ENCODE measurements at regions of chr19 and their contacts with region 1.

Region 1: DNA sequence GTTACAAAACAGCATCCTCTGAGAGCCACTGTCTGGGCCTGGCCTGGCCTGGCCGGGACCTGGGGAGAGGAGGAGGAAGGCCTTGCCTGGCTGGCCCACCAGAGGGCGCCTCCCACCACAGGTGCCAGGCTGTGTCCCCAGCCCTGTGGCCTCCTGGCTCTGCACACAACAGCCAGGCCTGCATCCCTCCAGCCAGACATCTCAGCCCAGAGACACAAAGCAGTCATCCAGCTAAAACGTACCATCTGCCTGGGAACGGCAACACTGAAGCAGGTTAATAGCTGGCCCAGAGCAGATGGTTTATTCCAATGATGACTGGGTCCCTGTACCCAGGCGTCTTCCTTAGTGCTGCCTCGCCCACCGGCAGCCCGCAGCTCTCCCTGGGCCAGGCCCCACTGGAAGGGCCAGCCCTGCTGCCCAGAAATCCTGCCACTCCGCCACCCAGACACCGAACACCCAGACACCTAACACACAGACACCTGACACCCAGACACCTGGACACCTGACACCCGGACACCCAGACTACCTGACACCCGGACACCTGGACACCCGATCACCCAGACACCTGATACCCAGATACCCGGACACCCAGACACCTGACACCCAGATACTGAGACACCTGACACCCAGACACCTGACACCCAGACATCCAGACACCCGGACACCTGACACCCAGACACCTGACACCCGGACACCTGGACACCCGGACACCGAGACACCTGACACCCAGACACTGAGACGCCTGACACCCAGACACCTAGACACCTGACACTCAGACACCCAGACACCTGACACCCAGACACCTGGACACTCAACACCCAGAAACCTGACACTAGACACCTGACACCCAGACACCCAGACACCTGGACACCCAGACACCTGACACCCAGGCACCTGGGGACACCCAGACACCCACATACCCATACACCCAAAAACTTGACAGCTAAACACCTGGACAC is 20.1 kb downstream of the C19orf12 start:
- DNase-seq: no peak
- H3K4me3 ChIP-seq: no peak overlapping the region
- H3K27me3 ChIP-seq: no peaks in the 10 kb centered on the region
- CTCF ChIP-seq: peak; percentile 97

Region 2: DNA sequence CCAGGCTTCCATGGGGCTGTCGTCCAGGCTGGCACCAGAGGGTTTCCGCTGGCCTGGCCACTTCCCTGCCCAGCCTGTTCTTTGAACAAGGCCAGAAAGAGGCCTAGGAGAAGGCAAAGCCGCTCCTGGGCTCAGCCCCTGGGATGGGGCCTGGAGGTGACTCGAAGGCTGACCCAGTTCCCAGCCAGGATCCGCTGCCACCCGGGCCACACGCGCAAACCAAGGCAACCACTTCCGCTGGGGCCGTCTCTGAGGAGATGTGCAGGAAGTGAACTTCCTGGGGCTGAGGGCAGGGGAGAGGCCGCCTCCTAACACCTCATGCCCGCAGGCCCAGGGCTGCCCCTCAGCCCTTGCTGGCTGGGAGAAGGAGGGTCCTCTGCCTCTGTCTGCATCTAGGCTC is 14.5 kb before region 1 on chr19:
- CTCF ChIA-PET with region 1: interaction called, 13 read pairs
- POLR2A ChIA-PET with region 1: no interaction called
- DNase-seq: no peak
- H3K4me3 ChIP-seq: no peak overlapping the region
- H3K27me3 ChIP-seq: no peaks in the 10 kb centered on the region
- CTCF ChIP-seq: no peak

Region 3: DNA sequence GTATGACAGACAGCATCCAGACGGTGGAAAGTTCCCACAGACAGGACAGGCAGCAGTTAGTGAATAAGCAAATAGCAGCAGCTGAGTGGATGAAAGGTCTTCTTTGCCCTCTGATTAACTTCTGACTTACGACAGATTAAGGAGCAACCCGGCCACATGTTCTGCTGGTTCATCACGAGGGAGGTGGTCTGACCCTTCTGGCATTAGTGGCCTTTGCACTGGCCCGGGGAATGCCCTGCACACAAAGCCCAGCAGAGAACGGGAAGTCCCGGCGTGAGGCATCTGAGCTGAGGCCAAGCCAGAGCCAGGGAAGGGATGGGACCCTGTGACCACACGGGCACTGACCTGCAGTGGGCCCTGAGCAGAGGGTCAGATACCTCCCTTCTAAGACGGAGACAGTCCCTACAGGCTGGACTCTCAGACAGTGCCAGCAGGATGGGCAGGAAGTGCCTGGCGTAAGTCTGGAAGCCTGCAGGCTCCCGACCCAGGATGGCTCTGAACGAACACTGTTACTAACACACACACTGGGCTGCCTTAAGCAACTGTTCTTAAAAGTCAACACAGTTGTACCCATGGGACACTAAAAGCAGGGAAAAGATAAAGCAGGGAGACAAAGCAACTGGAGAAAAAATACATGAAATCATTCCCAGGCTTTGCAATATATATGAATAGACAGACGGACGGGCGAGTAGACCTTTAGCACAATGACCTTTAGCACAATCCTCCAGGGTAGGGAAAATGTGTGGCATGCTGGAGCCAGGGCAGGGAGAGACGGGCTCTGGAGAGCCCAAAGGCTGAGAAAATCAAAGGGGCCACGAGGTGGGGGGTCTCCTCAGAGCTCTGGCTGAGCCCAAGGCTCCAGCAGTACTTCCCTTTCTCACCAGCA is 13.8 kb after region 1 on chr19:
- CTCF ChIA-PET with region 1: interaction called, 32 read pairs
- POLR2A ChIA-PET with region 1: no interaction called
- DNase-seq: no peak
- H3K4me3 ChIP-seq: no peak overlapping the region
- H3K27me3 ChIP-seq: no peaks in the 10 kb centered on the region
- CTCF ChIP-seq: no peak

Region 4: GRCh38 chr19:29714953-29715700 is 20.2 kb after region 1 on chr19 and contains the start of gene C19orf12:
- CTCF ChIA-PET with region 1: interaction called, 32 read pairs
- POLR2A ChIA-PET with region 1: no interaction called
- DNase-seq: no peak
- H3K4me3 ChIP-seq: peak within 1 kb of the TSS; percentile 89
- H3K27me3 ChIP-seq: no peaks in the 10 kb centered on the region
- CTCF ChIP-seq: no peak
- polyA plus RNA-seq, gene C19orf12: 21.8 and 33.9 TPM in 2 replicates

Region 5: GRCh38 chr19:29771708-29772414 is 76.9 kb after region 1 on chr19:
- CTCF ChIA-PET with region 1: no interaction called
- POLR2A ChIA-PET with region 1: no interaction called
- DNase-seq: no peak
- H3K4me3 ChIP-seq: no peak overlapping the region
- H3K27me3 ChIP-seq: no peaks in the 10 kb centered on the region; the same call in 1 of the 2 replicates
- CTCF ChIP-seq: peak; percentile 91

Measured in BJ (cell line).